Head of caudate nucleus (tissue), 42 donors: ENCODE measurements at regions of chr1 and their contacts with region 1.

Region 1: DNA sequence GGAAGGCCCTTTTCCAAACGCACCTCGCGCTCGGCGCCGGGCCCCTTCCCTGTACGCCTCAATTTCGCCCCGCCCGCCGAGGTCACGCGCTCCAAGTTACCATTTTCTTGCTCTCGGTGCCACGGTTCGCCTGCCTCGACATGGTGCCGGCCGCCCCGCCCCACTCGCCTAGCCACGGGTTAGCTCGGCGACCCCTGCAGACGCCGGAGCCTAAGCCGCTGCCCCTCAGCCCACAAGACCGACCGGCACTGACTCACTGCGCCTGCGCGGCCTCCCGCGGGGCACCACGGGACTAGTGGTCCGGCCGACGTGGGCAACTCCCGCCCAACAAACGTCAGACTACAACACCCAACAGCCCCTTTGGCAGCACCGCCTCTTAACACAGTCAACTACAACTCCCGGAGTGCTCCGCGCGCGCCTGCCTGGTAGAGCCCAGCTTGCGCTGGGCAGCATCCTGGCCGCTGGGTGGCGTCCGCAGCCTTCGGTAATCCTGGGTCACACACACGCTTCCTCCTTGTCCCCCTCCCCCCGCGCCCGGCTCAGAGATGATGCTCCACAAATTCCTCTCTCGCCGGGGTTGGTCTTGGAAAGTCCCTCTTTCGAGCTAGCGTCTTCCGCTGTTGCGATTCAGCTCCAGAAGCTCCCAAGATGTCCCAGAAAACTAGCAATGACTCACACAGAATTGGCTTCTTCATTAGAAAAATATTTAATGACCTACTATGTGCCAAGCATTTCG is at the start of gene TRAPPC3:
- DNase-seq: peak; percentile 99 to 100 (median 100)

Region 2: DNA sequence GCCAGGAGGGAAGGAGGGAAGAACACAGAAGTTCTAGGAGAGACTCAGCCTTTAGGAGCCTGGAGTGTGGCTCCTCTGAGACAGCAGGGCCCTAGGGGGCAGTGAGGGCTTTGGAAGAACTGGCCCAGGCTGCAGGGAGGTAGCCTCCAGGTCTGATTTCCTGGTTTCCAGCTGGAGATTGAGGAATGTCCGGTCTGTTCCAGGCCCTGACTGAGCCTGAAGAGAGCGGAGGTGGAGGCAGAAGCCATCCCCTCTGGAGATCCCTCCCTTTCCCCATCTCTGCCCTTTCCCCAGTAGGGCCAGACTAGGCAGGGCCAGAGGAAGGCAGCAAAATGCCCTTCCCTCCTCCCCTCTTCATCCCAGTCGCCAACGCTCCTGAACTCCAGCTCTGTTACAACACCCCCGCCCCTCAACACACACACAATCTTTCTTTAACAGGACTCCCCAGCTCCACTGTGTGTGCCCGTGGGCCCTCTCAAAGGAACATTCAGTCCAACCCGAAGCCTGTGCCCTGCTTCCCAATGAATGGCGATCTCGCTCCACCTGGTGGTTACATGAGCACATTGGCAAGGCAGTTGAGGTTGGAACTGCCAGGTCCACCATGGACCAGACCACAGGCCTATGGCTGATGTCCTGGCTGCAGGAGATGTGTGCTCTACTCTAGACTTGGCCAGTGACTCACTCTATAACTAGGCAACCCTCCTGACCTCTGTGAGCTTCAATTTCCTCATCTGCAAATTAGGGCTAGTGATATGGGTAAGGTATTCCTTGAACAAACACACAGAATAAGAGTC is 38.6 kb after region 1 on chr1:
- intact Hi-C with region 1: loop called (anchors 2 kb)
- DNase-seq: peak; percentile 77 to 95 (median 90)

Region 3: DNA sequence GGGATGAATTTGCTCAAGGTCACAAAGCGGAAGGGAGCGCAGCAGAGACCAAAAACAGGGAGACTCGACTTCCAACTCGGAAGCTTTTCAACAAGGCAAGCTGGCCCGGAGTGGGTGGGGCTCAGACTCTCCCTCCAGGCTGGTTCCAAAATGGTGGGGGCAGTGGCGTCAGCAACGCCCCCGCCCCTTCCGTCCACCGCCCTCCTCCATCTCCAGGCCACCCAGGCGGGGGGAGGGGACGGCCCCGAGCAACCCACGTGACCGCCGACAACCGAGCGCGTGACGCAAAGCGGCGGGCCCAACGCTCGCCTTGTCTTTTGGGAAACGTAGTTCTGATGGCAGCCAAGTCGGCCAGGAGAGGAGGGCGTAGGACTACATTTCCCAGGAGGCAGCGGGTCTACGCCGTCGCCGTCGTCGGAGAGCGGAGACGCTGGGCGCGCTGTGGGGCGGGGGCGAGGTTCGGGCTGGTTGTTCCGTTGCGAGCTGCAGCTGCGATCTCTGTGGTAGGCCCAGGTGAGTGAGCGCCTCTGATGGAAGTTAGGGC is 74.7 kb after region 1 on chr1 and contains the start of gene THRAP3:
- intact Hi-C with region 1: loop called (anchors 2 kb)
- DNase-seq: peak; percentile 99 to 100 (median 100)

Region 4: DNA sequence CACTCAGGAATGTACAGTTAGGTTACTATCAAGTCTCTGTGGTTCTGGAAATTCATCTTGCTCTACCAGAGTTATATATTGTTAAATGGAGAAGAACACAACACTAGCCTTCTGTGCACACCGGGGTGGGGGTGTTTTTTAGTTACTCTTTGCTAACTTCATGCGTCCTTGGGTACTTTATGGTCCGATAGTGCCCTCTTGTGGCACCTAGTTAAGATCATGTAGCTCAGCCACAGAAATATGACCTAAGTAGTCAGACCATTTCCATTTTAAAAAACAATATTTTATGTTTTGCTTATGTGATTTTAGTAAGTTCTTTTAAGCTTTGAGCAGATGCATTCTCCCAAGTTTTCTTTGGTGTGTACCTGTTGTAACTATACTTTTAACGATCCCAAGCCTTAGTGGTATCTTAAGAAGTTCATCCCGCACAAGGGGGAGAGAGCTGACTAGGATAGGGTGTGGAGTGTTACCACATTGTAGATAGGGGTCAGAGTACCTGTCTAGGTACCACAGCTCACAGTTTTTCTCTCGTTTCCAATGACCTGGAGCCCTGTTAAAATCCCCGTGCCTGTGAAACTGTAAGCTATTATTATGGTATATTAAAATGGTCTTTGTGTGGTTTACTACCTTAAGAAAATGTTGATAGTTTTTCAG is 136.2 kb after region 1 on chr1:
- intact Hi-C with region 1: loop called (anchors 2 kb)
- DNase-seq: peak in 36 of 42 donors; percentile 25 to 87 (median 65)